ENCODE measurements at regions of chr6 and their contacts with region 1.

Region 1: DNA sequence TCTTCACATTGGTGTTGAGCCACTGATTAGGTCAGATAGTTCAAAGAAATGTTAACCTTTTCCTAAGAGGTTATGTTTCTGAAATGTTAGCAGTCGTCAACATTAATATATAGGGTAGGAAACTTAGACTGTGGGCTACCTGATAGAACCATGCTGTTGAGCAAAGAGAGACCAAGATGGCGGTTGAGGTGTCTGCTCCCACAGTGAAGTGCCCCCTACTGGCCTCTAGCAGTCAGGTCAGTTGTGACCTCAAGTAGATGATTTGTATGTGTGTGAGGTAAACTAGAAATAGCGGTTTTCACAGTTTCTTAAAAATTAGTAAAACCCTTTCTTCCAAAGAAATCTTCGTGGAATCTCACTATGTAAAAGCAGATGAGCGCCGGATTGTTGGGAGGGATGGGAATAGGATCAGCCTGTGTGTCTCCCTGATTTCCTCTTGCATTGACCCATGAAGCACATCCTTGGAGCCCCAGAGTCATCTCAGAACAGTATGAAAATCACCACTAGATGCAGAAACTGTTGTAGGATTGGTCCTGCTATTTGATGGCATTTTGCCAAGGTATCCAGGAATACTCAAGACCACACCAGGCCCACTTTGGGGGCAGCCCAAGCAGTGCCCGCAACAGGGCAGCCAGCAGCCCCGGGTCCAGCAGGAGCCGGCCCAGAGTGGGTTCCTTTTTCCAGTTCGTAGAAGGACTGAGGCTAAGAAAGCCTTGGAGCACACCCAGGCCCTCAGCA is 40.4 kb downstream of the MTHFD1L start:
- DNase-seq: no peak
- H3K4me3 ChIP-seq: no peak overlapping the region
- H3K27ac ChIP-seq: no peak overlapping the region
- H3K4me1 ChIP-seq: no peaks in the 10 kb centered on the region
- H3K27me3 ChIP-seq: no peaks in the 10 kb centered on the region
- CTCF ChIP-seq: no peak
- EP300 ChIP-seq: no peak
- POLR2A ChIP-seq: no peak

Region 2: DNA sequence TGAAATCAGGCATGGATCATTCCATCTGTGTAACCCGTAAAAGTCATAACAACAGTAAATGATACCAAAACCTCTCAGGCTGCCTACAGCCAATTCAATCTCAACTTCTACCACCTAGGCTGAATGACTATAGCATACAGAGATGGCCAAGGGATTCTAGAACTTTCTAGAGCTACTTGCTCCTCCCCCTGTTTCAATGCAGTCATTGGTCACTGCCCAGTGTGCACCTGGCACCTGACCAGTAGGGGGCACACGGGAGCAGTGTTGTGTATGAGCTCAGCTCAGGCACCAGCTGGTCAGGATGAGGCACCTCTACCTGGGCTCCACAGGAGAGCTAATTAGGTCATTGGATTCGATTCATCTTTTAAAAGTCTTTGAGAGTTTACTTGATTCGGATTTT is 220.1 kb before region 1 on chr6:
- in situ Hi-C with region 1: no loop called
- intact Hi-C with region 1: no loop called
- DNase-seq: peak; percentile 50
- H3K4me3 ChIP-seq: no peak overlapping the region
- H3K27ac ChIP-seq: peak overlapping the region in 2 of 4 donors; percentile 30 to 48
- H3K4me1 ChIP-seq: peaks cover 4 to 34% (median 15%) of the 10 kb centered on the region in 4 donors
- H3K27me3 ChIP-seq: no peaks in the 10 kb centered on the region
- CTCF ChIP-seq: peak; percentile 30 to 54 (median 48)
- EP300 ChIP-seq: no peak
- POLR2A ChIP-seq: no peak

Region 3: DNA sequence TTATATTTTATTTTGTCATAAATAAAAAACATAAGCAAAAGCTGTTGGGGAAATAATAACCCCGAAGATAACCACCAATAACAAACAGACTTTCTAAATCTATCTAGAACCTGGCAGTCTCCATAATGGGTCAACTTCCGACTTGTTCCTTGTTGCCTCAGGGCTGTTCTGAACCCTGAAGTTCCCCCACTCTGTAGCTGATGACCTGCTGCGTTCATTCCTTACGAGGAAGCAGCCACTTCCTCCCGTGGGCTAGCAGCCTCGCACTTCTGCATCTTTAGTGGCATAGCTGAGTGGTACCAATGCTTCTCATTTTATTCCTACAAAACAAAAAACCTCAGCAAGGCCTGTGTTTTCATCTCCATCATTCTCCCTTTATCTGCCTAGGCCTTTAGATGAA is 203.3 kb before region 1 on chr6:
- in situ Hi-C with region 1: no loop called
- intact Hi-C with region 1: no loop called
- DNase-seq: no peak
- H3K4me3 ChIP-seq: no peak overlapping the region
- H3K27ac ChIP-seq: no peak overlapping the region
- H3K4me1 ChIP-seq: peaks cover 0 to 11% (median 0%) of the 10 kb centered on the region in 4 donors
- H3K27me3 ChIP-seq: no peaks in the 10 kb centered on the region
- CTCF ChIP-seq: no peak
- EP300 ChIP-seq: no peak
- POLR2A ChIP-seq: no peak

Region 4: GRCh38 chr6:151004415-151005024 is 98.6 kb after region 1 on chr6:
- in situ Hi-C with region 1: no loop called
- intact Hi-C with region 1: loop called (anchors 10 kb)
- DNase-seq: no peak
- H3K4me3 ChIP-seq: no peak overlapping the region
- H3K27ac ChIP-seq: peak overlapping the region; percentile 31 to 45 (median 39)
- H3K4me1 ChIP-seq: peaks cover 0 to 21% (median 10%) of the 10 kb centered on the region in 4 donors
- H3K27me3 ChIP-seq: no peaks in the 10 kb centered on the region
- CTCF ChIP-seq: no peak
- EP300 ChIP-seq: no peak
- POLR2A ChIP-seq: no peak

Region 5: DNA sequence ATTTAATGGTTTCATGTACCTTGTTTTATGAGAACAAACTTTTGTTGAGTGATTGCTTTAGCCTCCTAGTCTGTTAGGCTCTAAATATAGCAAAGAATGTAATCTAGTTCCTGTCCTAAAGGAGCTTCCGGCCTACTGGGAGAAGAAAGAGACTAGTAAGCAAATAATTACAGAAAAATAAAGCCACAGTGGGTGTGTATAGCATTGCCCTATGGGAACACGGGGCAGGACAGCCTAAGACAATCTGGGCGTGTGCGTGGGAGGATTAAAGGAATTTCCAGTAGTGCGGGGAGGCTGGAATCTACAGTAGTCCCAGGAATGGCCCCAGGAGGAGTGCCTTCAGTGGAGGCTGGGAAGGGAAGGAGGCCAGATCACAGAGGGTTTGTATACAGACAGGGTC is 235.7 kb after region 1 on chr6:
- in situ Hi-C with region 1: no loop called
- intact Hi-C with region 1: no loop called
- DNase-seq: no peak
- H3K4me3 ChIP-seq: no peak overlapping the region
- H3K27ac ChIP-seq: peak overlapping the region in 3 of 4 donors; percentile 6 to 41 (median 33)
- H3K4me1 ChIP-seq: peaks cover 0 to 8% (median 3%) of the 10 kb centered on the region in 4 donors
- H3K27me3 ChIP-seq: no peaks in the 10 kb centered on the region
- CTCF ChIP-seq: no peak
- EP300 ChIP-seq: no peak
- POLR2A ChIP-seq: no peak